ENCODE measurements at regions of chr2 and their contacts with region 1.

Region 1: DNA sequence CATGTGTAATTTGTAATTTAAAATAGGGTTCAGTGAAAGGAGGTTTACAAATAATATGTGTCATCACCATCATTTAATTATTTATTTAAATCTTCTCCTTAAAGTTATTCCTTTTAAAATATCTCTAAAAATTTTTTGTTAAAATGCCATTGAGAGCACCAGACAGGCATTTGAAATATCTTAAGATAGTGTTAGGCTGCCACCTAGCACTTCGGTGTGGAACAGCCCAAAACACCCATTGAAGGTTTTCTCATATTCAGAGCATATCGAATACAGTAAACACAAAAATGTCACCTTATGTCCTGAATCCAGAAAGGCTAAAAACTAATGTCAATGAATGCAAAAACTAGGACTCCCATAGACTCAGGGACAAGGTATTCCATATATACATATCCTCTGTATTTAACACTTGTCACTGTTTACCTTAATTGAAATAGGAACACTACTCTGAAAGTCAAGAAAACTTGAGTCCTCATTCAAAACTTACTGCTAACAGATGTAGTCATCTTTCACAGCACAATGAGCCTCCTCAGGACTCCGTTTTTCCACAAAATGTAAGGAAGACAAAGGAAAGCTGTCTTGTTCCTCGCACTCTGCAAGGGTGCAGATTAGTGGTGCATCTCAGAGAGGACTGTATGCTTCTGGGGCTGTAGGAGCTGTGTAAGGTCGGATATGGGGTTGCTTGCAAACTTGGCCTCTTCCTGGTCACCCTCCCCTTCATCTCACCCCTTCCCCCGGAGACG is 329.5 kb downstream of the PAX3 start:
- DNase-seq: no peak
- H3K4me3 ChIP-seq: no peak overlapping the region
- H3K27ac ChIP-seq: no peak overlapping the region
- H3K4me1 ChIP-seq: peaks cover 0 to 6% (median 0%) of the 10 kb centered on the region in 4 donors
- H3K27me3 ChIP-seq: no peaks in the 10 kb centered on the region
- CTCF ChIP-seq: peak; percentile 37 to 67 (median 60)
- EP300 ChIP-seq: no peak
- POLR2A ChIP-seq: no peak

Region 2: DNA sequence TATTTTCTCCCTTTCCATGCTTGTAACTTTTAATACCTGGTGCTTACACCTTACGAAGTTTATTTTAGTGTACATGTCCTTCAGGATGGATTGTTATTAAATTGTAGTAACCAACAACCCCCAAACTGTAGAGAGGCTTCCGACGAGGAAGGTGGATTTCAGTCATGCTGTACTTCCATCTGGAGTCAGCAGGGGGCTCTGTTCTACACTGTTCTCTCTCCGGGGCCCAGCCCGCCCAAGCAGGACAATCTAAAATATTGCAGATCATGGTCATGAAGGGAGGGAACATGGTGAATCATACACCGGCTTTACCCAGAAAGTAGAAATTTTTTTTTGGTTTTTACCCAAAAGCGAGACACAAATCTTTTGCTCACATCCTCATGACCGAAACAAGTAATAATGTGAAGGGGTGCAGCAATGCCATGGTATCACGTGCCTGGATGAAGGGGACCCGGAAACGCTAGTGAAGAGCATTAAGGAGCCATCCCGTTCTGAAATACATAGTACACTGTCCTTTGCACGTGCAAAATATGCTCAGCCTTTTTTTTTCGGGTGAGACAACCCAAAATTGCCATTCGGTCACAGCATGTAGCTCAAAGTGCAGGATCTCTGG is 1281.9 kb before region 1 on chr2:
- intact Hi-C with region 1: loop called (anchors 2 kb)
- DNase-seq: peak; percentile 86
- H3K4me3 ChIP-seq: no peak overlapping the region
- H3K27ac ChIP-seq: no peak overlapping the region
- H3K4me1 ChIP-seq: no peaks in the 10 kb centered on the region
- H3K27me3 ChIP-seq: no peaks in the 10 kb centered on the region
- CTCF ChIP-seq: peak; percentile 26 to 87 (median 86)
- EP300 ChIP-seq: no peak
- POLR2A ChIP-seq: no peak

Region 3: GRCh38 chr2:220887271-220887870 is 1081.9 kb before region 1 on chr2:
- intact Hi-C with region 1: no loop called
- DNase-seq: no peak
- H3K4me3 ChIP-seq: no peak overlapping the region
- H3K27ac ChIP-seq: no peak overlapping the region
- H3K4me1 ChIP-seq: no peaks in the 10 kb centered on the region
- H3K27me3 ChIP-seq: no peaks in the 10 kb centered on the region
- CTCF ChIP-seq: no peak
- EP300 ChIP-seq: no peak
- POLR2A ChIP-seq: no peak